ENCODE measurements at regions of chr1 and their contacts with region 1.

Region 1: DNA sequence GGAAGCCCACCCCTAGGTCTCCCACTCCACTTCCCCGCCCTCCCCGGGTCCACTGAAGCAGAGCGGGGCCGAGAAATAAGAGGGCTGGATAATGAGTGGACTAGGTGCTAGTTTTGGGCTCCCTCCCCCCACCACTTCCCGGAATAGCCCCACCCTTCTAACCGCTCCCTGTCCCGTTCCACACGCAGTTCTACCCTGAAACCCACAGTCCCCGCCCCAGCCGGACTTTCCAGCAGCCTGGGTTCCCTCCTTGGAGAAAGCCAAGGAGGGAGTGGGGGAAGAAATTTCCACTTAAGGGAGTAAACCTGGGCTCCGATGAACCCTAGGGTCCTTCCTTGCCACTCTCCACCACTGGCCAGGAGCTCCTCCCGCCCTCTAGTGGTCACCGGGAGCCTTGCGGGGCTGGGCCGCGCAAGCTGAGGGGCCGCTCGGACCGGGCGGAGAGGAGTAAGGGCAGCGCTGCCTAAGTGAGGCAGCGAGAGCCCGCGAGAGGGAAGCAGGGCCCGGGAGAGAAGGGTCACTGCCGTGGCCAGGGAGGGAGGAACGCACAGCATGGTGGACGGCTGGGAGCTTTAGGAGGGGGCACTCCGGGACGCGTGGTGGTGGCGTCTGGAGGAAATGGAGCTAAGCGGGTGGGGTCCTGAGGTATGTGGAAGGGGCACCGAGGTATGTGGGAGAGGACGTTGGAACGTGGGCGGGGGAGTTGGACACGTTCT is 14.3 kb downstream of the THBS3 start:
- DNase-seq: peak; percentile 94 to 97
- ATAC-seq: peak; percentile 92
- H3K4me3 ChIP-seq: no peak overlapping the region
- H3K27ac ChIP-seq: peak overlapping the region in 1 of 2 donors; percentile 68
- H3K4me1 ChIP-seq: no peaks in the 10 kb centered on the region
- H3K27me3 ChIP-seq: no peaks in the 10 kb centered on the region

Region 2: GRCh38 chr1:155176544-155177071 is 16.8 kb before region 1 on chr1:
- intact Hi-C with region 1: loop called in 1 of 2 experiments (anchors 1 kb)
- DNase-seq: peak; percentile 90 to 95
- ATAC-seq: peak; percentile 75
- H3K4me3 ChIP-seq: no peak overlapping the region
- H3K27ac ChIP-seq: no peak overlapping the region
- H3K4me1 ChIP-seq: no peaks in the 10 kb centered on the region
- H3K27me3 ChIP-seq: no peaks in the 10 kb centered on the region

Region 3: GRCh38 chr1:155227261-155228095 is 34.0 kb after region 1 on chr1:
- intact Hi-C with region 1: loop called in 1 of 2 experiments (anchors 5 kb)
- DNase-seq: peak; percentile 99
- ATAC-seq: peak; percentile 98
- H3K4me3 ChIP-seq: peak overlapping the region; percentile 37 to 57
- H3K27ac ChIP-seq: peak overlapping the region in 1 of 2 donors; percentile 83
- H3K4me1 ChIP-seq: peaks cover 5 to 8% of the 10 kb centered on the region in 2 donors
- H3K27me3 ChIP-seq: no peaks in the 10 kb centered on the region

Region 4: DNA sequence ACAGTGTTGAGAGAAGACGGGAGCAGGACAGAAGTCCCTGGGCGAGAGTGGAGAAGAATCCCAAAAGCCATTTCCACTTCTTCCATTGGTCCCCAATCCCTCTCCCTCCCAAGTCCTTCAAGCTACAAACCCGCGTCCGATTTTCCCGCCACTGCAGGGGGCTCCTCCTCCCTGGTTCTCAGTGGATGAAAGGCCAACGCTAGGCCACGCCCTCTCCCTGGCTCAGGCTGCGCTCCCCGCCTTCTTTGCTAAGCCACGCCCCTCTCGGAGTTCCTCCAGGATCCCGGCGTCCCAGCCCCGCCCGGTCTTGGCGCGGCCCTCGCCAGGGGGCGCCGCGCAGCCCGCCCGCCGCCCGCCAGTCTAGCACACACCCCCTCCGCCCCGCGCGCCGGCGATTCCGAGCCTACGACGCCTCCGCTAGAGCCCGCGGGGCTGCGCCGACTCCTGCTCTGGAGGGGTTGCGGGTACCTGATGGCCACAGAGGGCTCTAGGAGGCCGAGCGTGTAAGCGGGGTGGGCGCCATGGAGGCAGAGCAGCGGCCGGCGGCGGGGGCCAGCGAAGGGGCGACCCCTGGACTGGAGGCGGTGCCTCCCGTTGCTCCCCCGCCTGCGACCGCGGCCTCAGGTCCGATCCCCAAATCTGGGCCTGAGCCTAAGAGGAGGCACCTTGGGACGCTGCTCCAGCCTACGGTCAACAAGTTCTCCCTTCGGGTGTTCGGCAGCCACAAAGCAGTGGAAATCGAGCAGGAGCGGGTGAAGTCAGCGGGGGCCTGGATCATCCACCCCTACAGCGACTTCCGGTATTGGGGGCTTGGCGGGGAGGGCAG is 83.8 kb after region 1 on chr1 and contains the start of gene HCN3:
- intact Hi-C with region 1: no loop called
- DNase-seq: peak; percentile 98 to 99
- ATAC-seq: peak; percentile 92
- H3K4me3 ChIP-seq: peak within 1 kb of the TSS; percentile 36 to 44
- H3K27ac ChIP-seq: peak within 1 kb of the TSS in 1 of 2 donors; percentile 2
- H3K4me1 ChIP-seq: peaks cover 0 to 3% of the 10 kb centered on the region in 2 donors
- H3K27me3 ChIP-seq: no peaks in the 10 kb centered on the region
- total RNA-seq, gene HCN3: 1.8 to 5.7 TPM

Region 5: GRCh38 chr1:155308493-155309422 is 115.3 kb after region 1 on chr1 and contains the start of gene FDPS:
- intact Hi-C with region 1: loop called in 1 of 2 experiments (anchors 5 kb)
- DNase-seq: peak; percentile 99 to 100
- ATAC-seq: peak; percentile 99
- H3K4me3 ChIP-seq: peak within 1 kb of the TSS; percentile 50 to 53
- H3K27ac ChIP-seq: peak within 1 kb of the TSS in 1 of 2 donors; percentile 71
- H3K4me1 ChIP-seq: peaks cover 0 to 1% of the 10 kb centered on the region in 2 donors
- H3K27me3 ChIP-seq: no peaks in the 10 kb centered on the region
- total RNA-seq, gene FDPS: 88.6 to 104 TPM

Region 6: GRCh38 chr1:155669233-155670162 is 476.1 kb after region 1 on chr1:
- intact Hi-C with region 1: no loop called
- DNase-seq: no peak
- ATAC-seq: no peak
- H3K4me3 ChIP-seq: no peak overlapping the region
- H3K27ac ChIP-seq: no peak overlapping the region
- H3K4me1 ChIP-seq: no peaks in the 10 kb centered on the region
- H3K27me3 ChIP-seq: no peaks in the 10 kb centered on the region